Panc1 (cell line): ENCODE measurements at regions of chrX and their contacts with region 1.

Region 1: DNA sequence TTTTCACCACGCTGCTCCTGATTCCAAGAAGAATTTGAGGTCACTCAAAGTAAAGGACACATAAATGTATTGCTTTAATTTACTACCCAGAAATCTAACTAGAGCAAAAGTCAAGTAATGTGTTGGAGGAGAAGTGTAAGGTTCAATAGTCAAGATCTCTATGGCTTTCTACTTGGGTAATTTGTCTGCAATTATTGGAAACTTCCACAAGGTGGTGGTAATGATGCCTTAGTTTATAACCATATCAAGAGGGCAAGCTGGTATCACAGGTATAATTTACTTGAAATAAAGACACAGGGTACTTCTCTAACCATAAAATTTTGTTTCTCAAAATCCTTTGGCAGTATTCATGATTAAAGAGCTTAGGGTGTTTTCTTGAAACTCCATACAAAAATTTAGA is 10.2 kb upstream of the GRIA3 start:
- DNase-seq: no peak
- ATAC-seq: no peak
- H3K4me3 ChIP-seq: no peak overlapping the region
- H3K27ac ChIP-seq: no peak overlapping the region
- H3K4me1 ChIP-seq: no peaks in the 10 kb centered on the region
- H3K27me3 ChIP-seq: no peaks in the 10 kb centered on the region
- CTCF ChIP-seq: peak; percentile 39; the same call in 1 of the 2 replicates

Region 2: DNA sequence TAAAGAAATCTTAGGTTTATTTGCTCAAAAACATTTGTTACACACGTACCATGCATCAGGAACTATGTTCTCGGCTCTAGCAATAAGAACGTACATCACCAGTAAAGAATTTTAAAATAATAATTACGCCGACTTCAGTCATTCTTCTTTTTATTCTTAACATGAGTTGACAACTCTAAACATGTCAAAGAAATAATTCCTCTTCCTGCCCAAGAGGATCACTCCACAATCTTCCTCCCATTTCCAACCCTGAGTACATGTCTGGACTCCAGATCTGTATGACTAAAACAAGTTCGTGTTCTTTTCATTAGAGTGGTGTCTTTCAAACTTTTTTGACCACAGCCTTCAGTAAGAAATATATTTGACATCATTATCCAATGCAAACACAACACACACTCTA is 191.3 kb before region 1 on chrX:
- CTCF ChIA-PET with region 1: no interaction called
- POLR2A ChIA-PET with region 1: no interaction called
- in situ Hi-C with region 1: no loop called
- intact Hi-C with region 1: no loop called
- DNase-seq: no peak
- ATAC-seq: no peak
- H3K4me3 ChIP-seq: no peak overlapping the region
- H3K27ac ChIP-seq: no peak overlapping the region
- H3K4me1 ChIP-seq: no peaks in the 10 kb centered on the region
- H3K27me3 ChIP-seq: no peaks in the 10 kb centered on the region
- CTCF ChIP-seq: no peak

Region 3: GRCh38 chrX:123425904-123426303 is 252.1 kb after region 1 on chrX:
- CTCF ChIA-PET with region 1: no interaction called
- POLR2A ChIA-PET with region 1: no interaction called
- in situ Hi-C with region 1: no loop called
- intact Hi-C with region 1: loop called (anchors 1 kb)
- DNase-seq: no peak
- ATAC-seq: no peak
- H3K4me3 ChIP-seq: no peak overlapping the region
- H3K27ac ChIP-seq: no peak overlapping the region
- H3K4me1 ChIP-seq: no peaks in the 10 kb centered on the region
- H3K27me3 ChIP-seq: no peaks in the 10 kb centered on the region
- CTCF ChIP-seq: no peak